PC-9 (cell line): ENCODE measurements at regions of chr10 and their contacts with region 1.

Region 1: DNA sequence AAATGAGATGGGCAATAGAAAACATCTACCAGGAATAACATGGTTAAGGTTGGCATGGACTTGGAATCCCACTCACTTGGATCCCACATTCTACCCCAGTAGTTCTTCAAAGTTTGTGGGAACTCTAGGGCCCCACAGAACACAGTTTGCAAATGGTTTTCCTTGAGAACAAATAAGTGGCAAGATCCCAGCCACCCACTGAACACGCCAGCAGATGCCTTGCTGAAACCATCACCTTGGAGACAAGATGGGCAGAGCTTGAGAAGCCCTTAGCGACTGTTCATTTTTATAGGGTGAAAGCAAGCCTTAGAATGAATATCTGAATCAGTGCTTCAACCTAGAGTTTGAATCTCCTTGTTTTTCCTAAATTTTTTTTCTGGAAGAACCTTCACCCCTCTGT is 349.1 kb downstream of the RPS24 start:
- DNase-seq: no peak
- H3K4me3 ChIP-seq: no peak overlapping the region
- H3K27ac ChIP-seq: no peak overlapping the region
- H3K4me1 ChIP-seq: no peaks in the 10 kb centered on the region
- H3K27me3 ChIP-seq: peaks cover 53% of the 10 kb centered on the region
- CTCF ChIP-seq: no peak

Region 2: DNA sequence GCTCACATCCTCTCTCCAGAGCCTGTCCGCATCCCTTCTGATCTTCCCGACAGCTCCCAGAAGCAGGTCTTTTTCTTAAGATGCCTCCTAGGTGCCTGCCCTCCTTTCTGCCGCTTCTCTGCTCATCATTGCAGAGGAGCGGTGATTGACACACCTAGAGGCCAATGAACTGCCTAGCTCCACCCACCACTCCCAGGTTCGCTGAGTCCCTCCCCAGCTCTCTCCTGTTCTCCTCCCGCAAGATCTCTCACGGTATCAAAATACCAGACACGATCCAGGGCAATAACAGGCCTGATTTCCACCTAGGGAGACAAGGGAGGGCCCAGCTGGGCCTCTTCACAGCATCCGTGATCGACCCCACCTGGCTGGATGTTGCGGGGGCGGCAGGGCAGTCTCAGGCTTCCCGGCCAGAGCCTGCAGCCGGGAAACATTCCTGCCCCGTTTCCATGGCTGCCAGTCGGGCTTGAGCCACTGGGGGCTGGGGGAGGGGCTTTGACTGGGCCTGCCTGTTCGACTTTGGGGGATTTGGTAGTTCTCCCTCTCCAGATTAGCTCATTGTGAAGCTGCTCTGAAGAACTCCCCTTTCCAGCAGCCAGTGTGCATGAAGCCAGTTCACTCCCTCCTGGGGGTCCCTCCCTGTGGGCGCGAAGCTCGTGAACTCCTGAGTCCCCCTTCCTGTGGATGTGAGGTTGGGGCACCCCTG is 24.4 kb after region 1 on chr10:
- CTCF ChIA-PET with region 1: no interaction called
- POLR2A ChIA-PET with region 1: no interaction called
- intact Hi-C with region 1: loop called (anchors 1 kb)
- DNase-seq: peak; percentile 68 to 70
- H3K4me3 ChIP-seq: peak overlapping the region; percentile 36; the same call in 1 of the 2 replicates
- H3K27ac ChIP-seq: no peak overlapping the region
- H3K4me1 ChIP-seq: no peaks in the 10 kb centered on the region
- H3K27me3 ChIP-seq: peaks cover 47% of the 10 kb centered on the region; the same call in 1 of the 2 replicates
- CTCF ChIP-seq: no peak